Activated CD4-positive, alpha-beta memory T cell treated with anti-CD3 and anti-CD28 coated beads for 36 hours (primary cell): ENCODE measurements at regions of chr14 and their contacts with region 1.

Region 1: GRCh38 chr14:22994762-22995275 is 12.5 kb upstream of the AJUBA start:
- DNase-seq: peak; percentile 40
- H3K4me3 Mint-ChIP-seq: no peak overlapping the region
- H3K27ac Mint-ChIP-seq: no peak overlapping the region
- H3K4me1 Mint-ChIP-seq: peaks cover 3% of the 10 kb centered on the region
- H3K27me3 Mint-ChIP-seq: no peaks in the 10 kb centered on the region

Region 2: DNA sequence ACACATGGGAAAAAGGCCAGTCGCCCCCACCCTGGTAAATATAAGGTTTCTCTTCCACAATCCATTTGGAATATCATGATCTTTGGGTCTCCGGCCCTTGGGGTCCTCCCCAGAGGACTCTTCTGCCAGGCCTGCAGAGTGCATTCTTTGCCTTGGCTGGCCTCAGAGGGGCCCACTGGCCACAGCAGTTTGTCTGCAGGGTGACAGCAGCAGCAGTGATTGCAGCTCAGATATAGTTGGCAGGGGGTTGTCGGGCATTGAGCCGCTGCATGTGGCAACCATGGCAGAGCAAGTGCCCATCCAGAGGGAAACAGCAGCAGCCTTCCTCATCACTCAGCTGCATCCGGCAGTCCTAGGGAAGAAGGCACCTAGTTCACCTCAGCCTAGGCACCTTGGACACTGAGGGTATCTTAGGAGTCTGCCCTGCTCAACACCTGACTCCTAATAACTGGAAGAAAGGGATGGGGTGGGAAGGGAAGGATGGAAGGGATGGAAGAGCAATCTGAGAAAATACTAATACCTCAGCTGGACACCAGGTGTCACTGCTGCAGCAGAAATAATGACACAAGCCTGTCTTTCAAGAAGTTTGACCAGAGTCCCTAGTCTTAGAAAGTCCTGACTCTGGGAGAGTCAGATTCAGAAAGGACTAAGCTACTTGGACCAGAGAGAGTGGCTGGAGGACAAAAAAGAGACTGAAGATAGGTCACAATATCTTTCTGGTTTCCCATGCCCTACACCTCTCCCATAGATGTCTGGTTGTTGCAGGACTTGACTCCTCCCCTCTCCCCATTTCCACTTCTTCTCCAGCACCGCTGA is 21.4 kb before region 1 on chr14:
- CTCF ChIA-PET with region 1: interaction called, 28 read pairs
- POLR2A ChIA-PET with region 1: no interaction called
- intact Hi-C with region 1: no loop called
- DNase-seq: peak; percentile 55
- H3K4me3 Mint-ChIP-seq: no peak overlapping the region
- H3K27ac Mint-ChIP-seq: no peak overlapping the region
- H3K4me1 Mint-ChIP-seq: no peaks in the 10 kb centered on the region
- H3K27me3 Mint-ChIP-seq: no peaks in the 10 kb centered on the region

Region 3: DNA sequence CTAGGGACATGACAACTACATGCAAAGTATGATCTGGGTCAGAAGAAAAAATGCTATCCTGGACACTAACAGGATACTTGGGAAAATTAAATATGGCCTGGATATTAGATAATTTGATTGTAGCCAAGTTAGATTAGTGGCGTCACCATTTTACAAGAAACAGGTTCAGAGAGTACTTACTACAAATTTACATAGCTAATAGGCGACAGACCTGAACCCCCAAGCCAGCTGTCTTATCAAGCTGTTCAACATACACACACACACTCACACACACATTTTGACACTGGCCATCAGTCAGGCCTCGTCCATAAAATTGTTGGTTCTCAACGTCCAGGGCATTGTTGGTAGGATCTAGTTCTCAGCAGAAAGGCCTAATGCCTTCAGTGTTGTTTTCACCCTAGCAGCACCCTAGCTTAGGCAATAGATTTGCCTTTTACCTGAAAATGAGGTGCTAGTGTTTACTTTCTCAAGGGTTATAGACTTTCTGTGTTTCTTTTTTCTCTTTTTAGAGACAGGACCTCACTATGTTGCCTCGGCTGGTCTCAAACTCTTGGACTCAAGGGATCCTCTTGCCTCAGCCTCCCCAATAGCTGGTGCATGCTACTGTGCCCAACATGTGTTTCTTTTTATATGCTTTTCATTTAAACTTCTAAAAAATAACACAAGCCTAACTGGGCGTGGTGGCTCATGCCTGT is 18.4 kb after region 1 on chr14:
- CTCF ChIA-PET with region 1: interaction called, 39 read pairs
- POLR2A ChIA-PET with region 1: no interaction called
- intact Hi-C with region 1: no loop called
- DNase-seq: no peak
- H3K4me3 Mint-ChIP-seq: no peak overlapping the region
- H3K27ac Mint-ChIP-seq: no peak overlapping the region
- H3K4me1 Mint-ChIP-seq: peaks cover 14% of the 10 kb centered on the region
- H3K27me3 Mint-ChIP-seq: no peaks in the 10 kb centered on the region